BJ (cell line): ENCODE measurements at regions of chr22 and their contacts with region 1.

Region 1: DNA sequence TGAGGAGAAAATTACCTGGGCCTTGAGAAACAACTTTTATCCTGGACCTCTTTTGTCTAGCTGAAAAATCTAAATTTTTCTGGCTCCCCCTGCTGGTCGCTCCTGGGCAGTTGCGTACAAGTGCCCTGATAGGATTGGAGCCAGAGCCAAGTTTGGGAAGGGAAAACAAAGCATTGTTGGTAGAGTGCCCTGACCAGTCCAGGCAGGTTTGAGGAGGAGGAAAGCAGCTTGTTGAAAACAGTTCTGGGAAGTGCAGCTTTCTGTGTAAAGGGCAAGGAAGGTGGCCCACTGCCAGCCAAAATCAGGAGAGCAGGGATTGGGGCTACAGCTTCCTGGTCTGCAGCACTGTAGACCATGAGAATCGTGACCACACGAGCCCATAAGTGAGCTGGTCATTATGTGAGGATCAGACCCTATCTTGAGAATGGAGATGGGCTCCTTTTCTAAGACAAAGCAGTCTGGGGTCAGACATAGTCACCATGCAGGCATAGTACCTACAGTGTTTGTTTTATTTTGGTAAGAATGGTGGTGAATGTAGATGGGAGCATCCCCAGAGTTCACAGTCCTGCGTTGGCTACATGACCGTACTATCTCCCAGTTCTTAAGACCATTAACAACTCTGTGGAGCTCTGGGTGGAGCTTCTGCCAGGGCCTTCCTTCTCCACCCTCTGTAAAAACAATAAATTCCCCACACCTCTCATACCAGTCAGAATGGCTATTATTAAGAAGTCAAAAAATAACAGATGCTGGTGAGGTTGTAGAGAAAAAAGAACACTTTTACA is 21.3 kb upstream of the PIK3IP1 start:
- DNase-seq: no peak
- H3K4me3 ChIP-seq: no peak overlapping the region
- H3K27me3 ChIP-seq: no peaks in the 10 kb centered on the region
- CTCF ChIP-seq: peak; percentile 90

Region 2: DNA sequence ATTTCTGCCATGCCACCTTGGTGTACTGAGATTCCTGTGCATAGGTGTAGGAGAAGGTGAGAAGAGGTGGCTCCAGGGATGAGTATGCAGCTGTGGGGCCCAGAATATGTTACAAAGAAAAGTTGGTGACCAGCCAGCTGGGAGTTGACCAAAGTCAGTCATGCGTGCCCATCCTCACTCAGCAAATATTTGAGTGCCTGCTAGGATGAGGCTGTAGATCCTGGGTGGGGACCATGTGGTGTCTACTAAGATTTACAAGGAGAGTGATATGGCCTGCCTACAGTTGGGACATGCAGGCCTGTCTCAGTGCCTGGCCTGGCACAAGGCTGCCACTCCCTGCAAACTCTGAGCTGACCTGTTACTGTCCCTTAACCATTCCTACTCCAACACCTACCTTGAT is 134.2 kb before region 1 on chr22:
- CTCF ChIA-PET with region 1: no interaction called
- POLR2A ChIA-PET with region 1: no interaction called
- DNase-seq: no peak
- H3K4me3 ChIP-seq: no peak overlapping the region
- H3K27me3 ChIP-seq: no peaks in the 10 kb centered on the region
- CTCF ChIP-seq: no peak

Region 3: GRCh38 chr22:31265841-31266585 is 47.5 kb before region 1 on chr22:
- CTCF ChIA-PET with region 1: no interaction called
- POLR2A ChIA-PET with region 1: no interaction called
- DNase-seq: no peak
- H3K4me3 ChIP-seq: no peak overlapping the region
- H3K27me3 ChIP-seq: no peaks in the 10 kb centered on the region
- CTCF ChIP-seq: no peak

Region 4: DNA sequence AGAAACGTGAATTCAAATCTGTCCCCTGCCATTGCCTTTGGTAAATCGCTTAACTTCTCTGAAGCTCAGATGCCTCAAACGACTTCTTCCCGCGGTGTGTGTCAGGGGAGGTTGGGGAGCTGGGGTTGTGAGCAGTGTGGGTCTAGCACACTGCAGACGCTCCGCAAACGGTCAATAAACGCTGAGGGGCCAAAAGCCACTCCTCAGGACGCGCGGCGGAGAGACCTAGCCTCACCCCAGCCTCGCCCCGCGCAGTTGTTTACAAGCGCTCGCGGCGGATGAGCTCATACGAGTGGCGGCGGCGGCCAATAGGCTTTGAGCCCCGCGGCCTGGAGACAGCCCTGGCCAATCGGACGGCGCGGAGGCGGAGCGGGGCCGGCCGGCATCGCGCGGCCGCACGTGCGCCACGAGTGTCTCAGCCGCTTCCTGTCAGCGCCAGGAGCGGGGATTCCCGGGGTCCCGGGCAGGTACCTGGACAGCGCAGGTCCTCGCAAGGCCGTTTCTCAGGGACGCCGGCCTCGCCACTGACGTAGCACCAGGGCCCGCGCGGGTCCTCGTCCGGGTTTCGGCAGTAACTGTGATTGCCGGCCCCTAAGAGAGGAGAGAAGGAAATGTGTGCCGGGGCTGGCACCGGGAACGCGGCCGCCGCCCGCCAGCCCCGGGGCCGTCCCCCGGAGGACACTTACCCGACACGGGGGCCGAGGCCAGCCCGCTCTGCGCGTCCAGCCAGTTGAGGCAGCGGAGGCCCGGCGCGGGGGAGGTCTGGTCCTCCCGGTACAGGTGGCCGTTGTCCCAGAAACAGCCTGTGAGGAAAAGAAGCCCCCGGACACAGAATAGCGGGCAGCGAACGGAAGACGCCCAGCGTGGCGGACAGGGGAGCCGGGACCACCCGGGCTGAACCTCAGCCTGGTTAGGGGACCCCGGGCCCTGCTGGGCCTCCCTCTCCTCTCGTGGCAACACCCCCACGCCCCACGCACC is 22.8 kb before region 1 on chr22:
- CTCF ChIA-PET with region 1: interaction called, 143 read pairs
- POLR2A ChIA-PET with region 1: no interaction called
- DNase-seq: peak; percentile 49
- H3K4me3 ChIP-seq: peak overlapping the region; percentile 37
- H3K27me3 ChIP-seq: no peaks in the 10 kb centered on the region
- CTCF ChIP-seq: no peak

Region 5: DNA sequence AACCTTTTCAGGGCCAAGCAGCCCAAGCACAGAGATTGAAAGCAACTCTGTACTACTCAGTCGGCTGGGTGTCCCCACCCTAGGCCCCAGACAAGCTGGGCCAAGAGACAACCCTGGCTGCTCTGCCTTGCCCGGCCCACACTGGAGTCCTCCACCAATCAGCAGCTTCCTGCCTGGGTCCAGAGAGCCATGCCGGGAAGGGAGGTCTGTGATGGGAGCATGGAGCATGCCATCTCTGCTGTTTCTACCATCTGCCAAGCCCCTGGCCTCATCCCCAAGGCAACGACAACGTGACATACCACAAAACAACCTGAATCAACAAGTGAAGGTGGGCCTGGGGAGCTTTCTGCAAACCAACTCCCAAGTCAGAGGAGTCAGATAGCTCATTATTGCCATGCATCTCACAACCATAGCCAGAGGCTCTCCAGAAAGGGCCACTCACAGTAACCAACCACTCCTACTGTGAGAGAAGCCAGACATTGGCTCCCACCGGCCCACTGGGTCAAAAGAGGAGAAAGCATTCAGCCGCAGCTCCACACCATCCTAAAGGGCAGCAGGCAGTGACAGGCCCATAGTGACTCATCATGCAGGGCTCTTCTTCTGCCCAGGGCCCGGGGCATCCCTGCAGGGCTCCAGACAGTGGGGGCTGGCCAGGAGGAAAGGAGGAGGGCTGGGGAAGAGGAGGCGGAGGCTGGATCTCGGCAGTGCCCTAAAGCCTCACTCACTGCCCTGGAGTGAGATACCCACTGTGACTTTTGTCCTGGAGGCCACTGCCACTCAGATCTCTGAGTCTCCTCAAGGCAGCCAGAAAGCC is 14.5 kb after region 1 on chr22:
- CTCF ChIA-PET with region 1: interaction called, 33 read pairs
- POLR2A ChIA-PET with region 1: no interaction called
- DNase-seq: no peak
- H3K4me3 ChIP-seq: no peak overlapping the region
- H3K27me3 ChIP-seq: no peaks in the 10 kb centered on the region
- CTCF ChIP-seq: no peak

Region 6: DNA sequence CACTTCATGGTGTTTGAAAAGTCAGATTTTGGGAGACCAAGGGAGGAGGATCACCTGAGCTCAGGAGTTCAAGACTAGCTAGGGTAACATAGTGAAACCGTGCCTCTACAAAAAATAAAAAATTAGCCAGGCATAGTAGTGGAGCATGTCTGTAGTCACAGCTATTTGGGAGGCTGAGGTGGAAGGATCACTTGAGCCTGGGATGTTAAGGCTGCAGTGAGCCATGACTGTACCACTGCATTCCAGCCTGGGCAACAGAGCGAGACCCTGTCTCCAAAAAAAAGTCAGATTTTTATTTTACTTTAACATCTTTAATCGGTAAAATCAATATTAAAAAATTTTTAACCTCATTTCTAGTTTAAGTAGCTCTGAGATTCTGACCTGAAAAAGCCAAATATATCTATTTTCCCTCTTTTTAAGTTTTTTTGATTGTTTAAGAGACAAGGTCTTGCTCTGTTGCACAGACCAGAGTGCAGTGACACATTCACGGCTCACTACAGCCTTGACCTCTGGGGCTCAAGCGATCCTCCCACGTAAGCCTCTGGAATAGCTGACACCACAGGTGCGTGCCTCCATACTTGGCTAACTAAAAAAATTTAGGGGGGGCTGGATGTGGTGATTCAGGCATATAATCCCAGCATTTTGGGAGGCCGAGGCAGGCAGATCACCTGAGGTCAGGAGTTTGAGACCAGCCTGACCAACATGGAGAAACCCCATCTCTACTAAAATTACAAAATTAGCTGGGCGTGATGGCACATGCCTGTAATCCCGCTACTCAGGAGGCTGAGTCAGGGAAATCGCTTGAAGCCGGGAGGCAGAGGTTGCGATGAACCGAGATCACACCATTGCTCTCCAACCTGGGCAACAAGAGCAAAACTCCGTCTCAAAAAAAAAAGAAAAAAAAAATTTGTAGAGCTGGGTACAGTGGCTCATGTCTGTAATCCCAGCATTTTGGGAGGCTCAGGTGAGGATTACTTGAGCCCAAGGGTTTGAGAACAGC is 231.2 kb after region 1 on chr22:
- CTCF ChIA-PET with region 1: no interaction called
- POLR2A ChIA-PET with region 1: no interaction called
- DNase-seq: no peak
- H3K4me3 ChIP-seq: no peak overlapping the region
- H3K27me3 ChIP-seq: no peaks in the 10 kb centered on the region
- CTCF ChIP-seq: no peak